ENCODE measurements at regions of chr12 and their contacts with region 1.

Region 1: DNA sequence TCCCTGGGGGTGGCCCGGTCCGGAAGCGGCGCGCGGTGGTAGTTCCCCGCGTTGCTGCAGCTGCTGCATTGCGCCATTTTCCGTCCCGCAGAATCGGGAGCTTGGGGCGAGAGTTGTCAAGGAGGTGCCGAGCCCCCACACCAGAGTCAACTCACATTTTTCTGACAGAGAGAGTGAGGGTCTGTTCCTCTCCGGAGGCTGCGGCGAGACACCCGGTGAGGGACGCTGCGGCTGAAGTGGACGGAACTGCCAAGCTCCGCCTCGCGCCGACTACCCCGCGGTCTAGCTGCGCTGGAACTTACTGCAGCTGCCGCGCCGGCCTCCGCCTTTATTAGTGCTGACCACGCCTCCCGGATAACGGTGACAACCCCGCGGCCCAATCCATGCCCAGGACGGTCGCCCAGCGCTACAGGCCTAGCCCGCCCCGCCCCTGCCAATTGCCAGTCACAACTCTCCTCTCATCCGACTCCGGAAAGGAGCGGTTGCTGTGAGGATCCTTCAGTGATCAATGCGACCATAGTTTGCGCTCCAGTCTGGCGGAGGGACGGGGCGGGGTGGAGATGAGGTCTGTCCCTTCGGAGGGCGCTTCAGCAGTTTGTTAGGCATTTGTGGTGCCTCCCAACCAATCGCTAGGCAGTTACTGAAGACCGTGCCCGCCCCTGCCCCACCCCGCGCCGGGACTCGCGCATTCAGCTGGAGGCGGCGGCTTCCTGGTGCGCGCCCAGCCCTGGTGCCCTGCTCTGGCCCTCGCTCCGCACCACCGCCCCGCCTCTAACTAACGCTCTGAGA is at the start of gene VAMP1:
- DNase-seq: peak; percentile 94 to 98 (median 97)
- ATAC-seq: peak; percentile 88
- H3K4me3 ChIP-seq: peak within 1 kb of the TSS; percentile 88 to 89
- H3K4me3 Mint-ChIP-seq: peak within 1 kb of the TSS; percentile 92
- H3K27ac ChIP-seq: peak within 1 kb of the TSS; percentile 79 to 84
- H3K27ac Mint-ChIP-seq: peak within 1 kb of the TSS; percentile 90
- H3K4me1 ChIP-seq: peaks cover 42% of the 10 kb centered on the region
- H3K4me1 Mint-ChIP-seq: peaks cover 47% of the 10 kb centered on the region
- H3K27me3 ChIP-seq: no peaks in the 10 kb centered on the region
- H3K27me3 Mint-ChIP-seq: no peaks in the 10 kb centered on the region
- CTCF ChIP-seq: no peak
- total RNA-seq, gene VAMP1: 43.9 to 50.9 TPM

Region 2: GRCh38 chr12:6323340-6323994 is 147.1 kb before region 1 on chr12:
- CTCF ChIA-PET with region 1: interaction called, 13 read pairs
- POLR2A ChIA-PET with region 1: interaction called, 3 read pairs
- intact Hi-C with region 1: no loop called
- DNase-seq: peak in 6 of 9 experiments; percentile 40 to 83 (median 59)
- ATAC-seq: peak; percentile 85
- H3K4me3 ChIP-seq: peak overlapping the region; percentile 12 to 19
- H3K4me3 Mint-ChIP-seq: peak overlapping the region; percentile 80
- H3K27ac ChIP-seq: peak overlapping the region in 1 of 2 experiments; percentile 54
- H3K27ac Mint-ChIP-seq: peak overlapping the region; percentile 93
- H3K4me1 ChIP-seq: peaks cover 47% of the 10 kb centered on the region
- H3K4me1 Mint-ChIP-seq: peaks cover 63% of the 10 kb centered on the region
- H3K27me3 ChIP-seq: no peaks in the 10 kb centered on the region
- H3K27me3 Mint-ChIP-seq: no peaks in the 10 kb centered on the region
- CTCF ChIP-seq: peak; percentile 82

Region 3: GRCh38 chr12:6355491-6356371 is 114.8 kb before region 1 on chr12:
- CTCF ChIA-PET with region 1: interaction called, 10 read pairs
- POLR2A ChIA-PET with region 1: interaction called, 5 read pairs
- intact Hi-C with region 1: no loop called
- DNase-seq: no peak
- ATAC-seq: no peak
- H3K4me3 ChIP-seq: no peak overlapping the region
- H3K4me3 Mint-ChIP-seq: no peak overlapping the region
- H3K27ac ChIP-seq: no peak overlapping the region
- H3K27ac Mint-ChIP-seq: no peak overlapping the region
- H3K4me1 ChIP-seq: peaks cover 2% of the 10 kb centered on the region
- H3K4me1 Mint-ChIP-seq: peaks cover 17% of the 10 kb centered on the region
- H3K27me3 ChIP-seq: no peaks in the 10 kb centered on the region
- H3K27me3 Mint-ChIP-seq: no peaks in the 10 kb centered on the region
- CTCF ChIP-seq: no peak

Region 4: GRCh38 chr12:6434205-6435140 is 36.1 kb before region 1 on chr12:
- CTCF ChIA-PET with region 1: interaction called, 29 read pairs
- POLR2A ChIA-PET with region 1: interaction called, 315 read pairs
- intact Hi-C with region 1: no loop called
- DNase-seq: peak in 5 of 9 experiments; percentile 44 to 73 (median 57)
- ATAC-seq: peak; percentile 83
- H3K4me3 ChIP-seq: peak overlapping the region in 1 of 2 experiments; percentile 38
- H3K4me3 Mint-ChIP-seq: peak overlapping the region; percentile 66
- H3K27ac ChIP-seq: peak overlapping the region; percentile 31 to 74
- H3K27ac Mint-ChIP-seq: peak overlapping the region; percentile 93
- H3K4me1 ChIP-seq: peaks cover 33% of the 10 kb centered on the region
- H3K4me1 Mint-ChIP-seq: peaks cover 48% of the 10 kb centered on the region
- H3K27me3 ChIP-seq: no peaks in the 10 kb centered on the region
- H3K27me3 Mint-ChIP-seq: no peaks in the 10 kb centered on the region
- CTCF ChIP-seq: no peak

Region 5: GRCh38 chr12:6451348-6452244 is 19.0 kb before region 1 on chr12 and contains the start of gene TAPBPL:
- CTCF ChIA-PET with region 1: interaction called, 64 read pairs
- POLR2A ChIA-PET with region 1: interaction called, 315 read pairs
- intact Hi-C with region 1: no loop called
- DNase-seq: peak; percentile 50 to 96 (median 79)
- ATAC-seq: peak; percentile 88
- H3K4me3 ChIP-seq: peak within 1 kb of the TSS; percentile 68 to 82
- H3K4me3 Mint-ChIP-seq: peak within 1 kb of the TSS; percentile 99
- H3K27ac ChIP-seq: peak within 1 kb of the TSS; percentile 85 to 95
- H3K27ac Mint-ChIP-seq: peak within 1 kb of the TSS; percentile 99
- H3K4me1 ChIP-seq: peaks cover 63% of the 10 kb centered on the region
- H3K4me1 Mint-ChIP-seq: peaks cover 82% of the 10 kb centered on the region
- H3K27me3 ChIP-seq: no peaks in the 10 kb centered on the region
- H3K27me3 Mint-ChIP-seq: no peaks in the 10 kb centered on the region
- CTCF ChIP-seq: no peak
- total RNA-seq, gene TAPBPL: 11.8 to 12.2 TPM

Region 6: DNA sequence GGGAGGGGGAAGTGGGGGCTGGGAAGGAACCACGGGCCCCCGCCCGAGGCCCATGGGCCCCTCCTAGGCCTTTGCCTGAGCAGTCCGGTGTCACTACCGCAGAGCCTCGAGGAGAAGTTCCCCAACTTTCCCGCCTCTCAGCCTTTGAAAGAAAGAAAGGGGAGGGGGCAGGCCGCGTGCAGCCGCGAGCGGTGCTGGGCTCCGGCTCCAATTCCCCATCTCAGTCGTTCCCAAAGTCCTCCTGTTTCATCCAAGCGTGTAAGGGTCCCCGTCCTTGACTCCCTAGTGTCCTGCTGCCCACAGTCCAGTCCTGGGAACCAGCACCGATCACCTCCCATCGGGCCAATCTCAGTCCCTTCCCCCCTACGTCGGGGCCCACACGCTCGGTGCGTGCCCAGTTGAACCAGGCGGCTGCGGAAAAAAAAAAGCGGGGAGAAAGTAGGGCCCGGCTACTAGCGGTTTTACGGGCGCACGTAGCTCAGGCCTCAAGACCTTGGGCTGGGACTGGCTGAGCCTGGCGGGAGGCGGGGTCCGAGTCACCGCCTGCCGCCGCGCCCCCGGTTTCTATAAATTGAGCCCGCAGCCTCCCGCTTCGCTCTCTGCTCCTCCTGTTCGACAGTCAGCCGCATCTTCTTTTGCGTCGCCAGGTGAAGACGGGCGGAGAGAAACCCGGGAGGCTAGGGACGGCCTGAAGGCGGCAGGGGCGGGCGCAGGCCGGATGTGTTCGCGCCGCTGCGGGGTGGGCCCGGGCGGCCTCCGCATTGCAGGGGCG is 63.5 kb after region 1 on chr12 and contains the start of gene GAPDH:
- CTCF ChIA-PET with region 1: interaction called, 56 read pairs
- POLR2A ChIA-PET with region 1: interaction called, 81 read pairs
- intact Hi-C with region 1: loop called (anchors 1 kb)
- DNase-seq: peak; percentile 66 to 92 (median 84)
- ATAC-seq: no peak
- H3K4me3 ChIP-seq: peak within 1 kb of the TSS; percentile 85 to 94
- H3K4me3 Mint-ChIP-seq: peak within 1 kb of the TSS; percentile 87
- H3K27ac ChIP-seq: peak within 1 kb of the TSS; percentile 85 to 88
- H3K27ac Mint-ChIP-seq: peak within 1 kb of the TSS; percentile 96
- H3K4me1 ChIP-seq: peaks cover 47% of the 10 kb centered on the region
- H3K4me1 Mint-ChIP-seq: peaks cover 49% of the 10 kb centered on the region
- H3K27me3 ChIP-seq: no peaks in the 10 kb centered on the region
- H3K27me3 Mint-ChIP-seq: no peaks in the 10 kb centered on the region
- CTCF ChIP-seq: no peak
- total RNA-seq, gene GAPDH: 503 to 513 TPM

Region 7: GRCh38 chr12:6825398-6826124 is 355.0 kb after region 1 on chr12:
- CTCF ChIA-PET with region 1: no interaction called
- POLR2A ChIA-PET with region 1: no interaction called
- intact Hi-C with region 1: no loop called
- DNase-seq: peak; percentile 59 to 86 (median 79)
- ATAC-seq: peak; percentile 63
- H3K4me3 ChIP-seq: no peak overlapping the region
- H3K4me3 Mint-ChIP-seq: peak overlapping the region; percentile 5
- H3K27ac ChIP-seq: no peak overlapping the region
- H3K27ac Mint-ChIP-seq: no peak overlapping the region
- H3K4me1 ChIP-seq: peaks cover 13% of the 10 kb centered on the region
- H3K4me1 Mint-ChIP-seq: peaks cover 32% of the 10 kb centered on the region
- H3K27me3 ChIP-seq: peaks cover 10 to 45% of the 10 kb centered on the region in 2 experiments
- H3K27me3 Mint-ChIP-seq: peaks cover 48% of the 10 kb centered on the region
- CTCF ChIP-seq: peak; percentile 71